ENCODE measurements at regions of chr12 and their contacts with region 1.

Region 1: DNA sequence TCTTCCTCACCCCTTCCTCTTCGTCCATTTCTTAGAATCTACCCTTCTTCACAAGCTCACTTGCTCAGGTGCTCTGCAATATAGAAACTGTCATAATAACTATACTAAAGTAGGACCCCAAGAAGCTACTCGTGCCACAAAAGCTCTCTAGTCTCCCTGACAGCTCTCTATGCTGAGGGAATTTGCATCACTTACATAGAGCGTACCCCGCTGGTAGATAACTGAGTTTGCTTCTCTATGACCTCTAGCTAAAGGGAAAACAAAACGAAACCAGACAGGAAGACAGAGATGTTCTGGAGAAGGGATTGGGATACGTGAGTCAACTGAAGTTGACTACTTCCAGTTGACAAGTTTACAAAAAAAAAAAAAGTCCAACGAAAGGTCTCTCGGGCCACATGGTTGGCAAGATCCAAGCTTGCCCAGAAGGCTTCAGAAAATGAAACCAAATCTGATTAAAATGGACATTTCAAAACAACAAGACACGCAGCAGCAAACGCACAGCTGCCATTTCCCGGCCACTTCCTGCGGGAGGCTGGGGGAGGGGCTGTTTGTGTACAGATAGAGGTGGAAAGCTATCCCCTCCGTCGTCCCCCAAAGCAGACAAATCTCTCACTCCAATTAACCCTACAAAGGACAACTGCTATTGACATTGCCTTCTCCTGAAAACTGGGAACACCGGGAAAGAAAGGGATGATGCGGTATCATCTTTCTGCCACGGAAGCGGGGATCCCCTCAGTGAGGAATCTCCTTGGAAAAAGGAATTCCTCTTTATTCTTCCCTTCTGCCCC is 1.3 kb downstream of the BAZ2A start:
- DNase-seq: peak; percentile 60
- H3K4me3 ChIP-seq: peak overlapping the region; percentile 53 to 80 (median 75)
- H3K27ac ChIP-seq: peak overlapping the region; percentile 40
- H3K4me1 ChIP-seq: peaks cover 36% of the 10 kb centered on the region
- H3K27me3 ChIP-seq: no peaks in the 10 kb centered on the region
- CTCF ChIP-seq: no peak

Region 2: GRCh38 chr12:56593909-56594621 is 34.8 kb before region 1 on chr12:
- CTCF ChIA-PET with region 1: no interaction called
- dilution Hi-C with region 1: loop called (anchors 5 kb)
- in situ Hi-C with region 1: no loop called
- intact Hi-C with region 1: no loop called
- DNase-seq: peak; percentile 59
- H3K4me3 ChIP-seq: no peak overlapping the region
- H3K27ac ChIP-seq: peak overlapping the region; percentile 9
- H3K4me1 ChIP-seq: peaks cover 12% of the 10 kb centered on the region
- H3K27me3 ChIP-seq: no peaks in the 10 kb centered on the region
- CTCF ChIP-seq: peak; percentile 82 to 88